B cell (primary cell): ENCODE measurements at regions of chr13 and their contacts with region 1.

Region 1: DNA sequence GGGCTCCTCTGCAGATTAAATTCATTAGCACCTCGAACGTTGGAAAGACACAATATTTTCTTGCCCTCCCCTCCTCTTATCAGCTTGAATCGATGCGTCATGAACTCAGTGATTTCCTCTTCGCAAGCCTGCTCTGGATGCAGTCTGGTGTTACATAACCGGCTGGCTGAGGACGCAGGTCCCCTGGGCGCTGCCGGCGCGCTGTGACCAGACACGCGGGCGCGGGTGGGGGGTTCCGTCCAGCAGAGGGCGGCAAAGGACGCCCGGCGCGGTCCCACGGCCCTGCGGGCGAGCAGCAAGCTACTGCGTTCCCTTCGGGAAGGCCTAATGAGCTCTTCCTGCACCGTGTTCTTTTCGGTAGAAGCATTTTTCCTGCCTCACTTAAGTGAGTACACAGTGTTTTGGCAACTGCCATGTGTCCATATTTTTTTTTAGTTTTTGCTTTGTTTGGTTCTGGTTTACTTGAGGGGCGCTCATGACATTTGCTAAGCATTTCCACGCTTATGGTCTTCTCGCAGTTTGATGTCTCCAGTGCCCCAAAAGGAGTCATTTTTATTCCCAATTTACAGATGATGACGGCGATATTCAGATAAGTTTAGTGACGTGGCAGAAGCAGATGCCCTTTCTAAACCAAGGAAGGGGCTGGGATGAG is 112.2 kb upstream of the MBNL2 start:
- DNase-seq: peak; percentile 77
- ATAC-seq: peak; percentile 96
- H3K4me3 ChIP-seq: no peak overlapping the region
- H3K4me3 Mint-ChIP-seq: no peak overlapping the region
- H3K27ac ChIP-seq: no peak overlapping the region
- H3K27ac Mint-ChIP-seq: no peak overlapping the region
- H3K4me1 ChIP-seq: peaks cover 7 to 11% of the 10 kb centered on the region in 2 donors
- H3K4me1 Mint-ChIP-seq: peaks cover 3% of the 10 kb centered on the region
- H3K27me3 ChIP-seq: peaks cover 0 to 10% (median 0%) of the 10 kb centered on the region in 4 experiments
- H3K27me3 Mint-ChIP-seq: peaks cover 22% of the 10 kb centered on the region
- CTCF ChIP-seq: peak; percentile 94

Region 2: GRCh38 chr13:96982672-96983071 is 127.3 kb before region 1 on chr13:
- CTCF ChIA-PET with region 1: no interaction called
- POLR2A ChIA-PET with region 1: no interaction called
- intact Hi-C with region 1: no loop called
- DNase-seq: no peak
- ATAC-seq: no peak
- H3K4me3 ChIP-seq: no peak overlapping the region
- H3K4me3 Mint-ChIP-seq: no peak overlapping the region
- H3K27ac ChIP-seq: no peak overlapping the region
- H3K27ac Mint-ChIP-seq: no peak overlapping the region
- H3K4me1 ChIP-seq: no peaks in the 10 kb centered on the region
- H3K4me1 Mint-ChIP-seq: no peaks in the 10 kb centered on the region
- H3K27me3 ChIP-seq: no peaks in the 10 kb centered on the region
- H3K27me3 Mint-ChIP-seq: peaks cover 2% of the 10 kb centered on the region
- CTCF ChIP-seq: no peak

Region 3: DNA sequence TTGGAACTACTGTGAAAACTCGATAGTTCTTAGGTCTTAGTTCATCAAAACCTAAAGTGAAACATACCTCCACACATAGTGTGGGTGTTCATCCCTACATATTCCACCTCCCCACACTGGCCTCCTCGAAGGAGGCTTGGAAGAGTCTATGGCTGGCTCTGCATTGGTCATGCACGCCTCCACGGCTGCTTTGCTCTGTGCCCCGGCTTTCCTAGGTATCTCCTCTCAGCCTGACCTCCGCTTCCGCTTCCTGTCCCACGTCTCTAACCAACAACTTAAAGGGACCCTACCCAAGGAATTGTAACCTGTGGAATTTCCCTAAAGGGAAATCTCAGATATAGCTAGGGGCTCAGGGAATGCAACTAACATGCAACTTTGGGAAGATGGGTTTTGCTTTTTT is 32.5 kb after region 1 on chr13:
- CTCF ChIA-PET with region 1: interaction called, 12 read pairs
- POLR2A ChIA-PET with region 1: no interaction called
- intact Hi-C with region 1: no loop called
- DNase-seq: no peak
- ATAC-seq: no peak
- H3K4me3 ChIP-seq: no peak overlapping the region
- H3K4me3 Mint-ChIP-seq: peak overlapping the region; percentile 57
- H3K27ac ChIP-seq: no peak overlapping the region
- H3K27ac Mint-ChIP-seq: no peak overlapping the region
- H3K4me1 ChIP-seq: no peaks in the 10 kb centered on the region
- H3K4me1 Mint-ChIP-seq: peaks cover 9% of the 10 kb centered on the region
- H3K27me3 ChIP-seq: peaks cover 0 to 4% (median 0%) of the 10 kb centered on the region in 4 experiments
- H3K27me3 Mint-ChIP-seq: peaks cover 46% of the 10 kb centered on the region
- CTCF ChIP-seq: no peak

Region 4: GRCh38 chr13:97221989-97222700 is 112.2 kb after region 1 on chr13 and contains the start of gene MBNL2:
- CTCF ChIA-PET with region 1: interaction called, 12 read pairs
- POLR2A ChIA-PET with region 1: no interaction called
- intact Hi-C with region 1: no loop called
- DNase-seq: peak; percentile 90
- ATAC-seq: peak; percentile 95
- H3K4me3 ChIP-seq: peak within 1 kb of the TSS; percentile 69 to 97 (median 78)
- H3K4me3 Mint-ChIP-seq: peak within 1 kb of the TSS; percentile 94
- H3K27ac ChIP-seq: peak within 1 kb of the TSS; percentile 88 to 95
- H3K27ac Mint-ChIP-seq: peak within 1 kb of the TSS; percentile 93
- H3K4me1 ChIP-seq: peaks cover 40% of the 10 kb centered on the region in 2 donors
- H3K4me1 Mint-ChIP-seq: peaks cover 44% of the 10 kb centered on the region
- H3K27me3 ChIP-seq: no peaks in the 10 kb centered on the region
- H3K27me3 Mint-ChIP-seq: no peaks in the 10 kb centered on the region
- CTCF ChIP-seq: no peak
- total RNA-seq, gene MBNL2: 50.1 and 51.2 TPM in 2 replicates

Region 5: GRCh38 chr13:97344265-97345175 is 234.6 kb after region 1 on chr13:
- CTCF ChIA-PET with region 1: interaction called, 118 read pairs
- POLR2A ChIA-PET with region 1: no interaction called
- intact Hi-C with region 1: loop called (anchors 1 kb)
- DNase-seq: peak; percentile 32
- ATAC-seq: no peak
- H3K4me3 ChIP-seq: no peak overlapping the region
- H3K4me3 Mint-ChIP-seq: no peak overlapping the region
- H3K27ac ChIP-seq: no peak overlapping the region
- H3K27ac Mint-ChIP-seq: no peak overlapping the region
- H3K4me1 ChIP-seq: no peaks in the 10 kb centered on the region
- H3K4me1 Mint-ChIP-seq: no peaks in the 10 kb centered on the region
- H3K27me3 ChIP-seq: no peaks in the 10 kb centered on the region
- H3K27me3 Mint-ChIP-seq: no peaks in the 10 kb centered on the region
- CTCF ChIP-seq: peak; percentile 52

Region 6: DNA sequence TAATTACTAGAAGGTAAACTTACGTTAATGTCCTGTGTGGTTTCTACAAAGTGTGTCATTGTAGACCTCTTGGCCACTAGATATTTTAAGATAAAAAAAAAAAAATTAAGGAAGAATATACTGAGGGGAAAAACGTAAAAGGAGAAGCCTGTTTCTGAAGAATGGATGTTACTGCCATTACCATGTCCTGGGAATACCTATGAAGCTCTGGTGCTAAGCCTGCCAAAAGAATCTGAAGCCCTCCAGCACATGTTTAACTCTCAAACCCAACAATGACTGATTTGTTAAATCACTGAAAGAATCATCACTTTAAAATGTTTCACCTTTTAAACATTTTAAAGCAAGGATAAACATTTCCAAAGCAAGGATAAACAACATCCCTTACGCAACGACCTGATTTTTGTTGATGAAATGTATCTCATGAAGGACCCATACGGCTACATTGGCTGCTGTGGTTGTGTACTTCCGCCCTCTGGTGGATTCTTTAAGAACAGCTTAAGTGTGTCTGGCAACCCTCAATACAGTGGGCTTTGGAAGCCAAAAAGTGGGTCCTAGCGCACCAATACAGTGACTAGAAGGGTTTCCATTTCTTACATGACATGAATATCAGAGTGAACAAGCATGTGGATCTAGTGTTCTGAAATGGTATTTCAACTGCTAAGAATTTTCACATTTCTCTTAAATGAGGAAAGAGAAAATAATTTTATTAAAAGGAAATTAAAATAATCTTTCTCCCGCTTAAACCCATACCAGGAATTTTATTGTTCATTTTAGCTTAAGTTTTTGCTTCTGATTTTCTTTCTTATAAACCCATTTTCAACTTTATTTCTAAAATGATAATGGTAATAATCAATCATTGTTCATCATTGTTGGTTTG is 249.5 kb after region 1 on chr13:
- CTCF ChIA-PET with region 1: interaction called, 307 read pairs
- POLR2A ChIA-PET with region 1: interaction called, 4 read pairs
- intact Hi-C with region 1: loop called (anchors 1 kb)
- DNase-seq: peak; percentile 76
- ATAC-seq: peak; percentile 85
- H3K4me3 ChIP-seq: no peak overlapping the region
- H3K4me3 Mint-ChIP-seq: no peak overlapping the region
- H3K27ac ChIP-seq: no peak overlapping the region
- H3K27ac Mint-ChIP-seq: no peak overlapping the region
- H3K4me1 ChIP-seq: no peaks in the 10 kb centered on the region
- H3K4me1 Mint-ChIP-seq: no peaks in the 10 kb centered on the region
- H3K27me3 ChIP-seq: no peaks in the 10 kb centered on the region
- H3K27me3 Mint-ChIP-seq: no peaks in the 10 kb centered on the region
- CTCF ChIP-seq: peak; percentile 88

Region 7: DNA sequence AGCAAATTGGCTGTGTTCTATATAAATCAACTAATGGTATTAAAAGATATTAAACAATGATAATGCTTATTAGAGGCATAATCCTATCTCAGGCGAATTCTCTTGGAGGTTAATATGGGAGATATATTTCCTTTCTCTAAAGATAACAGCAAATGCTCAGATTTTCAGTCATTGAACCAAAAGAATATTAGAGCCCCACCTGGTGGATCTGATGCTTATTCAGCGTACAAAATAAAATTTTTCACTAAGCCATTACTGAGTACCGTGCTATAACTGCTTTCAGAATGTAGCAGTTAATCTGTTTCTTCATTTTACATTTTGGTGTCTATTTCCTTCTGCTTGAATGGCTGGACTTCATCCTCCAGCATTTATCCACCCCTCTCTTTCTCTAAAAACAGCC is 700.2 kb after region 1 on chr13:
- CTCF ChIA-PET with region 1: interaction called, 3 read pairs
- POLR2A ChIA-PET with region 1: no interaction called
- intact Hi-C with region 1: loop called (anchors 5 kb)
- DNase-seq: no peak
- ATAC-seq: no peak
- H3K4me3 ChIP-seq: no peak overlapping the region
- H3K4me3 Mint-ChIP-seq: no peak overlapping the region
- H3K27ac ChIP-seq: no peak overlapping the region
- H3K27ac Mint-ChIP-seq: no peak overlapping the region
- H3K4me1 ChIP-seq: no peaks in the 10 kb centered on the region
- H3K4me1 Mint-ChIP-seq: no peaks in the 10 kb centered on the region
- H3K27me3 ChIP-seq: no peaks in the 10 kb centered on the region
- H3K27me3 Mint-ChIP-seq: peaks cover 26% of the 10 kb centered on the region
- CTCF ChIP-seq: no peak